HepG2 (cell line): ENCODE measurements at regions of chr1 and their contacts with region 1.

Region 1: DNA sequence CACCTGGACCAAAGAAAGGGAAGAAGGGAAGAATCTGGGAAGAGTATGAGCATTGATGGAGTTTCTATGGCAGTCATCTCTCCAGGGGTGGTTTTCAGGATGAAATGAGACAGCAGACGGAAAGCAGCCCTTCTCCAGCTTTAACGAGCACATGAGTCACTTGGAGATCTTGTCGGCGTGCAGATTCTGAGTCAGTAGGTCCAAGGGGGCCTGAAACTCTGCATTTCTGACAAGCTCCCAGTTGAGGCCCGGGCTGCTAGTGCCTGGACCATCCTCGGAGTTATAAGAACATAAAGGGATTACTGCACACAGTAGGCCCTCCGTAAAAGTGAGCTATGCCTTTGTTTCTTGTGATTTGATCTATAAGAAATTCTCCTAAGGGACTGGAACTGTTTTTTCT is 17.6 kb downstream of the HSPG2 start:
- DNase-seq: no peak
- ATAC-seq: no peak
- H3K4me3 ChIP-seq: no peak overlapping the region
- H3K27ac ChIP-seq: no peak overlapping the region
- H3K4me1 ChIP-seq: peaks cover 64% of the 10 kb centered on the region
- H3K27me3 ChIP-seq: no peaks in the 10 kb centered on the region
- CTCF ChIP-seq: no peak
- EP300 ChIP-seq: no peak
- POLR2A ChIP-seq: no peak
- RAD21 ChIP-seq: no peak

Region 2: DNA sequence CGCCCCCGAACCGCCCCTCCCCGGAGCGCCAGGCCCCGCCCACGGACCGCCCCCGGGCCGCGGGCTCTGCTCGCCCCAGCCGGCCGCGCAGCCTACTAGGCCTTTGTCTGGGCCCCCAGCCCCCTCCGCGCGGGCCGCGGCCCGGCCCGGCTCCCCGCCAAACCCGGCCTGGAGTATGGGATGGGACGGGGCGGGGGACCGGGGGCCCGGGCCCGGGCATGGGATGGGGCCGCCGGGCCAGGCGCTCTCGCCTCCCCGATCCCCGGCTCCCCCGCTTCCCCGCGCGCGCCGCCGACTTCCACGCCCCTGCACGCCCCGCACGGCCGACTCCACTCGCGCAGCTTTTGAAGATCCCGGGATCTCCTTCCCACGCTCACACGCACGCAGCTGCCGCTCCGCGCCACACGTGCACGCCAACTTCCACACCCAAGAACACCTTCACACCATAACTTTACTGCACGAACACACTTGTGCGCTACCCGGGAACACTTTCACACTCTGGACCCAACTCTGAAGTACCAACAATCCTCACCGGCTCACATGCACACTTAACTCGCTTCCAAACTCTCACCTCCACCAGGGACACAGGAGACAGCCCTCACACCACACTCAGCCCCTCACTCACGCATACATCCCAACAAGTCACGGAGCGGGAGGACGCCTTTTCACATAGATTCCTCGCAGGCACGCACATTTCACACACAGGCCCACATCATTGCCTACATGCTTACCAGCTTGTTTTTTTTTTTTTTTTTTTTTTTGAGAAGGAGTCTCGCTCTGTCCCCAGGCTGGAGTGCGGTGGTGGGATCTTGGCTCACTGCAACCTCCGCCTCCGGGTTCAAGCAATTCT is 18.1 kb after region 1 on chr1:
- CTCF ChIA-PET with region 1: no interaction called
- POLR2A ChIA-PET with region 1: interaction called, 105 read pairs
- in situ Hi-C with region 1: no loop called
- intact Hi-C with region 1: no loop called
- DNase-seq: peak; percentile 72
- ATAC-seq: peak; percentile 56
- H3K4me3 ChIP-seq: peak overlapping the region; percentile 31 to 78 (median 68); a peak in 5 of 6 replicates
- H3K27ac ChIP-seq: no peak overlapping the region
- H3K4me1 ChIP-seq: peaks cover 91% of the 10 kb centered on the region
- H3K27me3 ChIP-seq: peaks cover 3 to 5% of the 10 kb centered on the region in 2 experiments; a peak in 2 of 5 replicates
- CTCF ChIP-seq: no peak
- EP300 ChIP-seq: peak in 1 of 2 experiments; percentile 4; a peak in 2 of 4 replicates
- POLR2A ChIP-seq: 0 out of 4 replicates have a peak, but pooled peaks of 1 of the 2 experiments have one; percentile 32
- RAD21 ChIP-seq: peak; percentile 46; the same call in 1 of the 2 replicates